Esophagus muscularis mucosa (tissue), 4 donors: ENCODE measurements at regions of chr11 and their contacts with region 1.

Region 1: GRCh38 chr11:18105802-18106574 is at the start of gene SAAL1:
- DNase-seq: no peak
- H3K4me3 ChIP-seq: peak within 1 kb of the TSS; percentile 82 to 94 (median 88)
- H3K27ac ChIP-seq: peak within 1 kb of the TSS; percentile 66 to 74 (median 68)
- H3K4me1 ChIP-seq: peaks cover 5 to 25% (median 22%) of the 10 kb centered on the region in 4 donors
- H3K27me3 ChIP-seq: peaks cover 0 to 13% (median 0%) of the 10 kb centered on the region in 4 donors
- CTCF ChIP-seq: peak; percentile 67 to 75 (median 72)
- EP300 ChIP-seq: no peak
- POLR2A ChIP-seq: no peak
- total RNA-seq, gene SAAL1: 10.3 to 19.1 (median 11.1) TPM

Region 2: DNA sequence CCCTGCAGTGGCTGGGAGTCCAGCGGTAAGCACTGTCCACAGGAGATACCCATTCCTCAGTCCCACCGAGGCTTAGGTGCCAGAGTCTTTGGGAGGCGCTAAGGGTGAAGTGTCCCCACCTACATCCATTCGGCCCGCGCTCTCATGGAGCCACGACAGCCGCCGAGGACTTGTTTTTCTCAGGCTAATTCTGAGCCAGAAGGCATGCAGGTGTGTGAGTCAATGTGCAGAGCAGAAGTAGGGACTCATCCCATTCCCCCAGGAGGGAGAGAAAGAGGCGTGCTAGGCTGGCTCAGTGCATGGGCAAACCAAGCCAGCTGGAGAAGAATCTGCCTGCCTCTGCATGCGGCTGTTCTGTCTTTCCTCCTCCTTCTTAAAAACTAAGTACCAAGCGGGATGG is 324.8 kb before region 1 on chr11:
- intact Hi-C with region 1: no loop called
- DNase-seq: no peak
- H3K4me3 ChIP-seq: no peak overlapping the region
- H3K27ac ChIP-seq: no peak overlapping the region
- H3K4me1 ChIP-seq: no peaks in the 10 kb centered on the region
- H3K27me3 ChIP-seq: no peaks in the 10 kb centered on the region
- CTCF ChIP-seq: no peak
- EP300 ChIP-seq: no peak
- POLR2A ChIP-seq: no peak

Region 3: GRCh38 chr11:17991783-17992433 is 114.1 kb before region 1 on chr11:
- intact Hi-C with region 1: loop called (anchors 5 kb)
- DNase-seq: no peak
- H3K4me3 ChIP-seq: no peak overlapping the region
- H3K27ac ChIP-seq: no peak overlapping the region
- H3K4me1 ChIP-seq: no peaks in the 10 kb centered on the region
- H3K27me3 ChIP-seq: no peaks in the 10 kb centered on the region
- CTCF ChIP-seq: peak; percentile 68 to 82 (median 76)
- EP300 ChIP-seq: no peak
- POLR2A ChIP-seq: no peak

Region 4: DNA sequence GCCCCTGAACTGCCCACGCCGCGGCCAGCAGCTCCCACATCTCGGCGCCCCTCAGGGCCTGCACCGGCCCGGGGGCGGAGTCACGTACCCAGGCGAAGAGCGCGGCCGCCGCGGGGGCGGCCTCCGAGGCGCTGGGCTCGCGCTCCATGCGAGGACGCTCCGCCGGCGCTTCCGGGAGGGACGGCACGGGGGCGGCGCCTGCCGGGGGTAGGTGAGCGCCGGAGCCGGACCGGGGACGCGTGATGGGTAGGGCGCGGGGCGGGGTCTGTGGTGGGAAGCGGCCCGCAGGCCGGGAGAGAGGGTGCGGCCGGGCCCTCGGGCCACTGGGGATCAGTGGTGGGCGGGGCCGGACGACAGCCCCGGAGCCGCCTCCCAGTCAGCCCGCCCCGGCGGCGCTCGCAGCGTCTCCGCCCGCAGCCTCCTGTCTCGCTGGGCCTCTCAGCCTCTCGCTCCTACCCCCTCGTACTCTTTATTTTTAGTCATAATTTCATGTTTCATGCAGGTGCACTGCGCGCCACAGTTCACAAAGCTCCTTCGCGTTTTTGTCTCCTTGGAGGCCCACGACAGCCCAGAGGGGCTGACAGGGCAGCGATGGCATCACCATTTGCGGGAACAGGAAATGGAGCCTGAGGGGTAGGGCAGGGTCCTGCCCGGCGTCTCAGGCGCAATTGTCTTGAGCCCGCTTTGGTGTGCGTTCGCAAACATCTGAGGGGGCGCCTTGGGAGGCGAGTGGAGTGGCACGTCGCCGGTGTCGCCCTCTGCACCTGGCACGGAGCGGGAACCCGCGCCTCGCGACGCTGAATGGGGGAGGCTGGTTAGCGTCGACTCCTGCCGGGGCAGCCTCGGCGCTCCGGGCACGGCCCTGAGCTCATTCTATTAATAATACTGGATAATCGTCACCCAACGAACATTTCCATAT is 92.9 kb before region 1 on chr11 and contains the start of gene SERGEF:
- intact Hi-C with region 1: loop called (anchors 5 kb)
- DNase-seq: peak; percentile 96
- H3K4me3 ChIP-seq: peak within 1 kb of the TSS; percentile 78 to 86 (median 80)
- H3K27ac ChIP-seq: peak within 1 kb of the TSS; percentile 77 to 92 (median 86)
- H3K4me1 ChIP-seq: peaks cover 8 to 18% (median 17%) of the 10 kb centered on the region in 4 donors
- H3K27me3 ChIP-seq: no peaks in the 10 kb centered on the region
- CTCF ChIP-seq: peak; percentile 15 to 38 (median 30)
- EP300 ChIP-seq: no peak
- POLR2A ChIP-seq: peak; percentile 73
- total RNA-seq, gene SERGEF: 32.0 to 50.2 (median 37.6) TPM

Region 5: GRCh38 chr11:18329196-18329870 is 223.3 kb after region 1 on chr11:
- intact Hi-C with region 1: no loop called
- DNase-seq: no peak
- H3K4me3 ChIP-seq: no peak overlapping the region
- H3K27ac ChIP-seq: no peak overlapping the region
- H3K4me1 ChIP-seq: peaks cover 8 to 13% (median 12%) of the 10 kb centered on the region in 4 donors
- H3K27me3 ChIP-seq: no peaks in the 10 kb centered on the region
- CTCF ChIP-seq: no peak
- EP300 ChIP-seq: no peak
- POLR2A ChIP-seq: no peak